ENCODE measurements at regions of chr2 and their contacts with region 1.

Region 1: GRCh38 chr2:24058564-24059271 is 9.2 kb downstream of the FKBP1B start:
- DNase-seq: no peak
- H3K4me3 ChIP-seq: no peak overlapping the region
- H3K4me3 Mint-ChIP-seq: no peak overlapping the region
- H3K27ac Mint-ChIP-seq: no peak overlapping the region
- H3K4me1 ChIP-seq: no peaks in the 10 kb centered on the region
- H3K4me1 Mint-ChIP-seq: no peaks in the 10 kb centered on the region
- H3K27me3 ChIP-seq: no peaks in the 10 kb centered on the region
- H3K27me3 Mint-ChIP-seq: no peaks in the 10 kb centered on the region
- CTCF ChIP-seq: no peak

Region 2: DNA sequence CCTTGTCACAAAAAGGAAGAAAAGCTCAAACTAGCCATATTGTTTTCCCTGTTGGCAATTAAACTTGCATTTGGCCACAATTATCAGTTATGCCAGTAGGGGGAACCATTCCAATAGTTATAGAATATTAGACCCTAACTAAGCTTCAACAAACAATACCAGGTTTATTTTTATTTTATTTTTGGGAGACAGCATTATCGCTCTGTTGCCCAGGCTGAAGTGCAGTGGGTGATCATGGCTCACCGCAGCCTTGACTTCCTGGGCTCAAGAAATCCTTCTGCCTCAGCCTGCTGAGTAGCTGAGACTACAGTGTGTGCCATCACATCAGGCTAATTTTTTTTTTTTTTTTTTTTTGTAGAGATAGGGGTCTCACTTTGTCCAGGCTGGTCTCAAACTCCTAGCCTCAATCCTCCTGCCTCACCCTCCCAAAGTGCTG is 233.9 kb before region 1 on chr2:
- CTCF ChIA-PET with region 1: no interaction called
- POLR2A ChIA-PET with region 1: no interaction called
- intact Hi-C with region 1: loop called (anchors 1 kb)
- DNase-seq: peak in 1 of 2 experiments; percentile 66
- H3K4me3 ChIP-seq: no peak overlapping the region
- H3K4me3 Mint-ChIP-seq: no peak overlapping the region
- H3K27ac Mint-ChIP-seq: no peak overlapping the region
- H3K4me1 ChIP-seq: no peaks in the 10 kb centered on the region
- H3K4me1 Mint-ChIP-seq: no peaks in the 10 kb centered on the region
- H3K27me3 ChIP-seq: no peaks in the 10 kb centered on the region
- H3K27me3 Mint-ChIP-seq: no peaks in the 10 kb centered on the region
- CTCF ChIP-seq: peak; percentile 72 to 74

Region 3: DNA sequence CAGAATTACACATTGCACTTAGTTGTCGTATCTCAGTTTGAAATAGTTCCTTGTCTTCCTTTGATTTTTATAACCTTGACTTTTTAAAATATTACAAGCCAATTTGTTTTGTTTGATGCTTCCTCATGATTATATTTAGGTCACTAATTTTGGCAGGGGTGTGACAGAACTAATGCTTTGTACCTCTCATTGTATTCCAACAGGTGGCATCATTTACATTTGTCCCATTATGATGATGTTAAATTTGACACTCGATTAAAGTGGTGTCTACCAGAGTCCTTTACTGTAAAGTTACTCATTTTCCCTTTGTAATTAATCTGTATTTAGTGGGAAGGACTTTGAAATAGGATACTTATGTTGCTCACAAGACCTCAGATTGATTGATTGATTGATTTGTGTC is 70.3 kb before region 1 on chr2:
- CTCF ChIA-PET with region 1: no interaction called
- POLR2A ChIA-PET with region 1: no interaction called
- intact Hi-C with region 1: loop called (anchors 2 kb)
- DNase-seq: no peak
- H3K4me3 ChIP-seq: no peak overlapping the region
- H3K4me3 Mint-ChIP-seq: no peak overlapping the region
- H3K27ac Mint-ChIP-seq: no peak overlapping the region
- H3K4me1 ChIP-seq: no peaks in the 10 kb centered on the region
- H3K4me1 Mint-ChIP-seq: no peaks in the 10 kb centered on the region
- H3K27me3 ChIP-seq: no peaks in the 10 kb centered on the region
- H3K27me3 Mint-ChIP-seq: no peaks in the 10 kb centered on the region
- CTCF ChIP-seq: peak; percentile 21 to 36

Region 4: DNA sequence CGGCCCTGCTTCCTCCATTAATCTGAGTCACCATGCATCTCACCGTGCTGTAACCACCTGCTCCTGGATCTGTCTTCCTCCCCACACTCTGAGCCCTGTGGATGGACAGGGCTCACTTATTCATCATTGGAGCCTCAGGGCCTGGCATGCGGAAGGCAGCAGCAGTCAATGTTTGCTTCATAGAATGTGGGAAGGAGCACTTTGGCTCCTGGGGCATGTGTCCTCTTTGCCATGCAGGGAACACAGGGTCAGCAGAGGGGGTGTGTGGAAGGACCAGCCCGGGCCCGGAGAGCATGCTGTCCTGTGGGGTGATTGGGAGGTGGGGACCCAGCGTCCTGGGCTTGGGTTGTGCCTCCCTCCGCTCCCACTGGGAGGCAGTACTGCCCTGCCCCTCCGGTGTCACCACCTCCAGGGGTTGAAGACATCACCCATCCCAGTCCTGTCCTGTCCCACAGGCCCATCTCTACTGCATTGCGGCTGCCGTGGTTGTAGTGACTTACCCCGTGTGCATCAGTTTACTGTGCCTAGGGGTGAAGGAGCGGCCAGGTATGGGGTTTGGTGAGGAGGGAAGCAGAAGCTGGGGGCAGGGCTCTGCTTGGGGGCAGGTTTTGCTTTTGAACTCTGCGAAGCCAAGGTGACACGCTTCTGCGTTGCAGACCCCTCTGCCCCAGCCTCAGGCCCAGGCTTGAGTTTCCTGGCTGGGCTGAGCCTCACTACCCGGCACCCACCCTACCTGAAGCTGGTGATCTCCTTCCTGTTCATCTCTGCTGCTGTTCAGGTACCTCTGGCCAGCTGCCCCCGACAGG is 37.3 kb before region 1 on chr2:
- CTCF ChIA-PET with region 1: no interaction called
- POLR2A ChIA-PET with region 1: no interaction called
- intact Hi-C with region 1: loop called (anchors 1 kb)
- DNase-seq: peak in 1 of 2 experiments; percentile 66
- H3K4me3 ChIP-seq: no peak overlapping the region
- H3K4me3 Mint-ChIP-seq: no peak overlapping the region
- H3K27ac Mint-ChIP-seq: no peak overlapping the region
- H3K4me1 ChIP-seq: peaks cover 6% of the 10 kb centered on the region
- H3K4me1 Mint-ChIP-seq: peaks cover 2% of the 10 kb centered on the region
- H3K27me3 ChIP-seq: no peaks in the 10 kb centered on the region
- H3K27me3 Mint-ChIP-seq: no peaks in the 10 kb centered on the region
- CTCF ChIP-seq: peak; percentile 33 to 73

Measured in Caco-2 (cell line).